Mucosa of descending colon (tissue), 3 donors: ENCODE measurements at regions of chr2 and their contacts with region 1.

Region 1: GRCh38 chr2:206700156-206700555 is 18.0 kb downstream of the DYTN start:
- DNase-seq: no peak
- ATAC-seq: no peak
- H3K4me3 ChIP-seq: no peak overlapping the region
- H3K4me1 ChIP-seq: no peaks in the 10 kb centered on the region
- CTCF ChIP-seq: no peak

Region 2: DNA sequence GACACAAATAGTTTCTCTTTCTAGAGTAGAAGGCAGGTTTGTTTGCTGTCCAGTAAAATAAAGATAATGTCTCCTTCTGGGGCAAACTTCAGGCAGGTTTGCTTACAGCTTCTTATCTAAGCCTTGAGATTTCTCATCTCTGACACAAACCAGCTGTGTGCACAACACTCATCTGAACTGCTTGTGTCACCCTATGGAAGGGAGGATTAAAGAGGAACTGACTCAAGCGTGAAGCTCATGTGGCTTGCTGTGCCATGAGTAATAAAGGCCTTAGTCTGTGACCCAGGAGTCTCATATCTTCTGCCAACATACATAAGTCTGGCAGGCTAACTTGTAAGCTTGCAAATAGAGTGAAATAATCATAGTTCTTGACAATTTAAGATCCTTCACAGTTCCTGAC is 215.0 kb after region 1 on chr2:
- intact Hi-C with region 1: no loop called
- DNase-seq: no peak
- ATAC-seq: no peak
- H3K4me3 ChIP-seq: no peak overlapping the region
- H3K4me1 ChIP-seq: no peaks in the 10 kb centered on the region
- CTCF ChIP-seq: no peak

Region 3: GRCh38 chr2:207487650-207488311 is 787.6 kb after region 1 on chr2:
- intact Hi-C with region 1: loop called in 1 of 2 experiments (anchors 10 kb)
- DNase-seq: no peak
- ATAC-seq: no peak
- H3K4me3 ChIP-seq: no peak overlapping the region
- H3K4me1 ChIP-seq: no peaks in the 10 kb centered on the region
- CTCF ChIP-seq: no peak